Natural killer cell (primary cell): ENCODE measurements at regions of chr7 and their contacts with region 1.

Region 1: DNA sequence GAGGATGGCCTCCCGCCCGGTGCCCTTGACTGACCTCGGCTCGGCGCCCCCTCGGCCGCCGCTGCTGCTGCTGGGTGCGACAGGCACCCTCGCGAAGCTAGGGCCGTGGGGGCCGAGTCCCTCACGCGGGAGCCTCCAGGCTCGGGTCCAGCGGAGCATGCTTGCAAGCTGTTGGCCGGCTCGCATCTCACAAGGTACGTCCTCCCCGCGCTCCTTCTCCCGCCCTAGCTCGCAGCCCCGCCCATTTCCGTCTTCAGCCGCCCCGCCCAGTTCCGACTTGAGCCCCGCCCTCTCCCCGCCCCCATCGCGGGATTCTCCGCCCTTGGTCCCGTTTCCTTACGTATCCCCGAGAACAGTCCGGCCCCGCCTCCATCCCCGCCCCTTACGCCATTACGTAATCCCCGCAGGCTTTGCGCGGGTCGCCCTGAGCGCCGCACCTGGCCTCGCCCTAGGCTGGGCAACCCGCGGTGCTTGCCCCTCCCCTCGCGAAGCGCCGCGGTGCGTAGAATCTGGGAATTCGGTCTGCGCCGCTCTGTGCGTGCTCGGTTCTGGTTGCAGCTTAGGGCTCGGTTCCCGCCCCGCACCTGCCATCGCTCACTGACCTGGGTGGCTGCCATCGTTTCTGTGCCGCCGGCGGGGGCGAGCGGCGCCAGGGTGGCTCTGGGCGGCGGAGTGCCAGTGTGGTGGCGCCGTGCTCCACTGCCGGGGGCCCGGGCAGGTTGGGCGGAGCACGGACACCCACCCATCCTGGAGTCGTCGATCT is at the start of gene ABHD11:
- DNase-seq: peak; percentile 96 to 98
- ATAC-seq: peak; percentile 86 to 96 (median 90)
- H3K4me3 ChIP-seq: peak within 1 kb of the TSS; percentile 89
- H3K4me3 Mint-ChIP-seq: peak within 1 kb of the TSS; percentile 89
- H3K27ac ChIP-seq: peak within 1 kb of the TSS; percentile 77
- H3K27ac Mint-ChIP-seq: peak within 1 kb of the TSS; percentile 81 to 93
- H3K4me1 ChIP-seq: peaks cover 24% of the 10 kb centered on the region
- H3K4me1 Mint-ChIP-seq: peaks cover 15 to 30% of the 10 kb centered on the region in 2 donors
- H3K27me3 ChIP-seq: no peaks in the 10 kb centered on the region
- H3K27me3 Mint-ChIP-seq: no peaks in the 10 kb centered on the region
- CTCF ChIP-seq: no peak
- total RNA-seq, gene ABHD11: 14.7 to 23.7 (median 20.0) TPM

Region 2: DNA sequence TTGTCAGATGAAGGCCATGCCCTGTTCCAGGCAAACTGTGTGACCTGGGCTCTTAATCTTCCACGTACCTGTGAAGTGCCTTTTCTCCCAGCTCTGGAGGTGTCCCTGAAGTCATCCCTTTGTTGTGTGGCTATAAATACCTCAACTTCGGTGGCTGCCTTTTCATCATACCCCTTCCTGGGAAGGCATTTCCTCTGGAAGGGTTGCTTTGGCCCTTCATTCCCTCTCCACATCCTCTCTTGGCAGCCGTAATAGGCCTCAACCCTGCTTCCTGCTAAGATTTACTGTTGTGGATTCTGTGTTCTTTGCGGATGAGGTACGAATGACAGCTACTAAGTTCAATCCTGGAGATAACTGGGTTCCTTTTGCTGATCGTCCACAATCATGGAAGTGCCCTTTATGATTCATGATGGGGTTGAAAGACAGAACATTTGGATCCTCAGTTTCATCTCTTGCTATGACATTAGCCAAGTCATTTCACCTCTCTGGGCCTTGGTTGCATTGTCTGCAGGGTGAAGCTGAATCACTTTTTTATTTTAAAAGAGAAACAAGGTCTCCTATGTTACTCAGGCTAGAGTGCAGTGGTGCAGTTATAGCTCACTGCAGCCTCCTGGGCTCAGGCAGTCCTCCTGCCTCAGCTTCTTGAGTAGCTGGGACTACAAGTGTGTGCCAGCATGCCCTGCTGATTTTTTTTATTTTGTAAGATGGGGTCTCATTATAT is 387.2 kb before region 1 on chr7:
- intact Hi-C with region 1: no loop called
- DNase-seq: no peak
- ATAC-seq: no peak
- H3K4me3 ChIP-seq: no peak overlapping the region
- H3K4me3 Mint-ChIP-seq: no peak overlapping the region
- H3K27ac ChIP-seq: no peak overlapping the region
- H3K27ac Mint-ChIP-seq: no peak overlapping the region
- H3K4me1 ChIP-seq: no peaks in the 10 kb centered on the region
- H3K4me1 Mint-ChIP-seq: peaks cover 0 to 9% of the 10 kb centered on the region in 2 donors
- H3K27me3 ChIP-seq: no peaks in the 10 kb centered on the region
- H3K27me3 Mint-ChIP-seq: no peaks in the 10 kb centered on the region
- CTCF ChIP-seq: no peak

Region 3: GRCh38 chr7:73578342-73579127 is 160.3 kb before region 1 on chr7 and contains the start of gene TBL2:
- intact Hi-C with region 1: loop called (anchors 1 kb)
- DNase-seq: peak; percentile 99
- ATAC-seq: peak; percentile 87 to 96 (median 89)
- H3K4me3 ChIP-seq: peak within 1 kb of the TSS; percentile 92
- H3K4me3 Mint-ChIP-seq: peak within 1 kb of the TSS; percentile 100
- H3K27ac ChIP-seq: peak within 1 kb of the TSS; percentile 74
- H3K27ac Mint-ChIP-seq: peak within 1 kb of the TSS; percentile 96 to 100
- H3K4me1 ChIP-seq: peaks cover 19% of the 10 kb centered on the region
- H3K4me1 Mint-ChIP-seq: peaks cover 11 to 31% of the 10 kb centered on the region in 2 donors
- H3K27me3 ChIP-seq: no peaks in the 10 kb centered on the region
- H3K27me3 Mint-ChIP-seq: no peaks in the 10 kb centered on the region
- CTCF ChIP-seq: no peak
- total RNA-seq, gene TBL2: 15.1 to 18.5 (median 17.6) TPM

Region 4: GRCh38 chr7:73606801-73607691 is 131.7 kb before region 1 on chr7:
- intact Hi-C with region 1: loop called (anchors 2 kb)
- DNase-seq: peak; percentile 70 to 82
- ATAC-seq: peak; percentile 69 to 90 (median 88)
- H3K4me3 ChIP-seq: no peak overlapping the region
- H3K4me3 Mint-ChIP-seq: no peak overlapping the region
- H3K27ac ChIP-seq: no peak overlapping the region
- H3K27ac Mint-ChIP-seq: no peak overlapping the region
- H3K4me1 ChIP-seq: peaks cover 7% of the 10 kb centered on the region
- H3K4me1 Mint-ChIP-seq: no peaks in the 10 kb centered on the region
- H3K27me3 ChIP-seq: peaks cover 14% of the 10 kb centered on the region
- H3K27me3 Mint-ChIP-seq: peaks cover 12 to 29% of the 10 kb centered on the region in 2 donors
- CTCF ChIP-seq: peak; percentile 91

Region 5: GRCh38 chr7:73652541-73652949 is 86.2 kb before region 1 on chr7:
- intact Hi-C with region 1: no loop called
- DNase-seq: no peak
- ATAC-seq: no peak
- H3K4me3 ChIP-seq: no peak overlapping the region
- H3K4me3 Mint-ChIP-seq: no peak overlapping the region
- H3K27ac ChIP-seq: no peak overlapping the region
- H3K27ac Mint-ChIP-seq: no peak overlapping the region
- H3K4me1 ChIP-seq: peaks cover 5% of the 10 kb centered on the region
- H3K4me1 Mint-ChIP-seq: peaks cover 0 to 16% of the 10 kb centered on the region in 2 donors
- H3K27me3 ChIP-seq: peaks cover 15% of the 10 kb centered on the region
- H3K27me3 Mint-ChIP-seq: peaks cover 36 to 41% of the 10 kb centered on the region in 2 donors
- CTCF ChIP-seq: no peak

Region 6: GRCh38 chr7:73667344-73668102 is 71.3 kb before region 1 on chr7 and contains the start of gene VPS37D:
- intact Hi-C with region 1: loop called (anchors 5 kb)
- DNase-seq: peak; percentile 93 to 96
- ATAC-seq: peak; percentile 93 to 99 (median 96)
- H3K4me3 ChIP-seq: peak within 1 kb of the TSS; percentile 35
- H3K4me3 Mint-ChIP-seq: peak within 1 kb of the TSS; percentile 84
- H3K27ac ChIP-seq: no peak within 1 kb of the TSS
- H3K27ac Mint-ChIP-seq: peak within 1 kb of the TSS in 1 of 2 donors; percentile 53
- H3K4me1 ChIP-seq: peaks cover 10% of the 10 kb centered on the region
- H3K4me1 Mint-ChIP-seq: peaks cover 0 to 10% of the 10 kb centered on the region in 2 donors
- H3K27me3 ChIP-seq: peaks cover 22% of the 10 kb centered on the region
- H3K27me3 Mint-ChIP-seq: peaks cover 28 to 35% of the 10 kb centered on the region in 2 donors
- CTCF ChIP-seq: peak; percentile 66
- total RNA-seq, gene VPS37D: 0.40 to 0.83 (median 0.48) TPM

Region 7: DNA sequence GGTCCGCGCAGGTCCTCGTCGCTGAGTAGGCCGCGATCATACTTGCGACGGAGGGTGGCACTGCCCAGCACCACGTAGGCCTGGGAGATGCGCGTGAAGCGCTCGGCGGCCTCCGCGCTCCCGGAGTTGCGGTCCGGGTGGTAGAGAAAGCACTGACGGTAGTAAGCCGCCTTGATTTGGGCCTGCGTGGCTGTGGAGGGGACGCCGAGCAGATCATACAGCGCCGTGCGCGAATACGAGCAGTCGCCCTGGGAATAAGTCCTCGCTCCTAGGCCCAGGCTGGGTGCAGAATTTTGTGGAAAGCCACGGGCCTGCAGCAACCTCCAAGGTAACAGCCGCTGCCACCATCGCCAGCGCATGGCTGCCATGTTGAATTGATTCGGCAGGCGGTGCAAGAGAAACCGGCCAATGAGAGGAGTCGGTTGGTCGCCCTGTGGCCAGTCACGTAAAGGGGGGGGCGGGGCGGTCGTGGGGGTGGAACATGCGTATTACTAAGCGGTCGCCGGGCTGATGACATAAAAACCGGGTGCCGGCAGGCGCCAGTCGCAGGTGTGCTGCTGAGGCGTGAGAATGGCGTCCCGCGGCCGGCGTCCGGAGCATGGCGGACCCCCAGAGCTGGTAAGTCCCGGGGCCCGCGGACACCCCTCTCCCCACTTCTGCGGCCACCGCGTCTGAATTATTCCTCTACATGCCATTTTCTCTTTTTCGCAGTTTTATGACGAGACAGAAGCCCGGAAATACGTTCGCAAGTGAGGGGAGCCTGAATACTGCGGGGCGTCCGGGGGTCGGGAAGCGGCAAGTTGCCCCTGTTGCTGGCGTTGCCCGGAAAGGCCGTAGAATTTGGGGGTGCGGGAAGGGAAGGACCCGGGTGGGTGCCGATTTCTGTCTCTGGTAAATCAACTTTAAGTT is 55.5 kb before region 1 on chr7 and contains the starts of genes BUD23 and DNAJC30:
- intact Hi-C with region 1: loop called (anchors 1 kb)
- DNase-seq: peak; percentile 86 to 96
- ATAC-seq: peak; percentile 96 to 98 (median 97)
- H3K4me3 ChIP-seq: peak within 1 kb of the TSS; percentile 98
- H3K4me3 Mint-ChIP-seq: peak within 1 kb of the TSS; percentile 99
- H3K27ac ChIP-seq: peak within 1 kb of the TSS; percentile 85
- H3K27ac Mint-ChIP-seq: peak within 1 kb of the TSS; percentile 94 to 97
- H3K4me1 ChIP-seq: peaks cover 23% of the 10 kb centered on the region
- H3K4me1 Mint-ChIP-seq: peaks cover 30% of the 10 kb centered on the region in 2 donors
- H3K27me3 ChIP-seq: no peaks in the 10 kb centered on the region
- H3K27me3 Mint-ChIP-seq: no peaks in the 10 kb centered on the region
- CTCF ChIP-seq: no peak
- total RNA-seq, gene BUD23: 93.1 to 101 (median 94.2) TPM
- total RNA-seq, gene DNAJC30: 8.7 to 9.9 (median 9.3) TPM

Region 8: GRCh38 chr7:73718905-73719805 is 19.6 kb before region 1 on chr7 and contains the start of gene STX1A:
- intact Hi-C with region 1: loop called (anchors 2 kb)
- DNase-seq: peak; percentile 63 to 89
- ATAC-seq: peak; percentile 72 to 86 (median 79)
- H3K4me3 ChIP-seq: peak within 1 kb of the TSS; percentile 65
- H3K4me3 Mint-ChIP-seq: peak within 1 kb of the TSS; percentile 94
- H3K27ac ChIP-seq: peak within 1 kb of the TSS; percentile 65
- H3K27ac Mint-ChIP-seq: peak within 1 kb of the TSS; percentile 26 to 92
- H3K4me1 ChIP-seq: peaks cover 42% of the 10 kb centered on the region
- H3K4me1 Mint-ChIP-seq: peaks cover 24 to 31% of the 10 kb centered on the region in 2 donors
- H3K27me3 ChIP-seq: no peaks in the 10 kb centered on the region
- H3K27me3 Mint-ChIP-seq: no peaks in the 10 kb centered on the region
- CTCF ChIP-seq: no peak
- total RNA-seq, gene STX1A: 13.2 to 20.4 (median 14.7) TPM